ENCODE measurements at regions of chr9 and their contacts with region 1.

Region 1: GRCh38 chr9:126611592-126612325 is 2.0 kb upstream of the LMX1B start:
- DNase-seq: peak; percentile 91
- H3K4me3 Mint-ChIP-seq: peak overlapping the region; percentile 18
- H3K27ac Mint-ChIP-seq: peak overlapping the region; percentile 63
- H3K4me1 Mint-ChIP-seq: peaks cover 13% of the 10 kb centered on the region
- H3K27me3 Mint-ChIP-seq: peaks cover 66% of the 10 kb centered on the region

Region 2: DNA sequence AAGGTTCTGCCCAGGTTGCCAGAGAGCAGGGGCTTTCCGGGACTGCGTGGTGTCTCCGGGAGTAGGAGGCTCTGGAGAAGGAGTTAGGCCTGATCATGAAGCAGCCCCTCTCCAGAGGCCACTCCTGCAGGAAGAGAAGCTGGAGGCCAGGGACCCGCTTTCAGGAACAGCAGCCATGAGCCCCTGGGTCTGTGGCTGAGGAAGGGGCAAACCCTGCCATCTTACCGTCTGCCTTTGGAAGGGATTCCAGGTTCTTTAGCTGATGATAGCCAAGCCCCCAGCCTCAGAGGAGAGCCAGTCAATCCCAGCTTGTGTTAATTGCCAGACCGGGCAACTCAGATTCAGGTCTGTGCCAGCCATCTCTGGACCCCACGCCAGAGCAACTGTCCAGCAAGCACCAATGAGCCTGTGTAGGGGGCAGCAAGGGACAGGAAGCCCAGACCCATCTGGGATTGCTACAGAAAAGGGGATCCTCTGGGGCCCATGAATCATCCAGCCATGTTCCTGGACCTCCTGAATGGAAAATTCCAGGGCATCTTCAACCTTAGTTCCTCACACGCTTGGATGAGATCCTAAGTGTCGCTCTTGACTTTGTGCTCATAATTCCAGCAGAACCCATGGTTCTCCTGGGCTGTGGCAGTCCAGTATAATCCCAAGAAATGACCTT is 327.8 kb before region 1 on chr9:
- intact Hi-C with region 1: no loop called
- DNase-seq: peak; percentile 40
- H3K4me3 Mint-ChIP-seq: no peak overlapping the region
- H3K27ac Mint-ChIP-seq: no peak overlapping the region
- H3K4me1 Mint-ChIP-seq: no peaks in the 10 kb centered on the region
- H3K27me3 Mint-ChIP-seq: peaks cover 22% of the 10 kb centered on the region

Region 3: GRCh38 chr9:126625329-126626126 is 13.8 kb after region 1 on chr9:
- intact Hi-C with region 1: loop called (anchors 2 kb)
- DNase-seq: peak; percentile 64
- H3K4me3 Mint-ChIP-seq: peak overlapping the region; percentile 69
- H3K27ac Mint-ChIP-seq: no peak overlapping the region
- H3K4me1 Mint-ChIP-seq: peaks cover 4% of the 10 kb centered on the region
- H3K27me3 Mint-ChIP-seq: peaks cover 88% of the 10 kb centered on the region

Region 4: GRCh38 chr9:126676685-126677143 is 65.0 kb after region 1 on chr9:
- intact Hi-C with region 1: loop called (anchors 5 kb)
- DNase-seq: no peak
- H3K4me3 Mint-ChIP-seq: no peak overlapping the region
- H3K27ac Mint-ChIP-seq: no peak overlapping the region
- H3K4me1 Mint-ChIP-seq: peaks cover 4% of the 10 kb centered on the region
- H3K27me3 Mint-ChIP-seq: peaks cover 76% of the 10 kb centered on the region

Region 5: DNA sequence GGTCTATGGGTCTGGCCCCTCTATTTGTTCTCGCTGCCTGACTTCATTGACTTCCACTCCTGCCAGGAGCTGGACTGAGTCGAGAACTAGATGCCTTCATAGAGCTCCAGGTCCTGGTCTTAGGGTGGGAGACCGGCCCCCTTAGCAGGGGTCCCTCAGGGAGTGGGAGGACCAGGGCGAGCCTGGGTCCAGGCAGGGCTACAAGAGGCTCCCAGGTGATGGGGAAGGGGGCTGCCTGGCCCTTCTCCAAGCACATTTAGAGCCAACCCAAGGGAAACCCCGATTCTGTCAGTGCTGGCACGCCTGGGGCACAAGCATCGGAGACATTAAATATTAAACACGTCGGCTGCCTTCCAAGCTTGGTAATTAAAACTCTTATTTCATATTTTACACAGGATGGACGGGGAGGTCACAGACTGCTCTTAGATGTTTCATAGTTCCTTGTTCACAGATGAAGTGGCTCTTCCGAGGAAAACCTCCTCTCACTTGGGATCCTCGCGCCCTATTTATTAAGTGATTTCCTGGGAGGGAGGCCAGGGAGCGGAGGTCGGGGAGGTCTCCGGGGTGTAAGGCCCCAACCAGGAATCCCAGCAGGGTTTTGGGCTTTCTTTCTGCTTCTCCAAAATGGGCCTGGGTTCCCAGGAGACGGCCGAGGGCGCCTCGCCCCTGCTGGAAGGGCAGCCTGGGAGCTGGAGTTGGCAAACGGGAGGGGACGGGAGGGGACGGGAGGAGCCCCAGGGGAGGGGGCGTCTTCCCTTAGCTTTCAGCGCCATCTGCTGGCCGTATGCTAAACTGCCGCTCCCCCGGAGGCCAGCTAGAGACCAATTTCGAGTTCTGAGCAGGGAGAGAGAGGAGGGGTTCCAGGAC is 169.7 kb after region 1 on chr9:
- intact Hi-C with region 1: loop called (anchors 1 kb)
- DNase-seq: peak; percentile 94
- H3K4me3 Mint-ChIP-seq: no peak overlapping the region
- H3K27ac Mint-ChIP-seq: no peak overlapping the region
- H3K4me1 Mint-ChIP-seq: no peaks in the 10 kb centered on the region
- H3K27me3 Mint-ChIP-seq: peaks cover 21% of the 10 kb centered on the region

Measured in activated CD4-positive, alpha-beta T cell treated with anti-CD3 and anti-CD28 coated beads, Interleukin-2, amount 10 ng/mL, durations not matched to agents 24 days and 14 days (primary cell).